Activated B cell treated with CpG ODN at 0.5 μM for 24 hours (primary cell): ENCODE measurements at regions of chr13 and their contacts with region 1.

Region 1: DNA sequence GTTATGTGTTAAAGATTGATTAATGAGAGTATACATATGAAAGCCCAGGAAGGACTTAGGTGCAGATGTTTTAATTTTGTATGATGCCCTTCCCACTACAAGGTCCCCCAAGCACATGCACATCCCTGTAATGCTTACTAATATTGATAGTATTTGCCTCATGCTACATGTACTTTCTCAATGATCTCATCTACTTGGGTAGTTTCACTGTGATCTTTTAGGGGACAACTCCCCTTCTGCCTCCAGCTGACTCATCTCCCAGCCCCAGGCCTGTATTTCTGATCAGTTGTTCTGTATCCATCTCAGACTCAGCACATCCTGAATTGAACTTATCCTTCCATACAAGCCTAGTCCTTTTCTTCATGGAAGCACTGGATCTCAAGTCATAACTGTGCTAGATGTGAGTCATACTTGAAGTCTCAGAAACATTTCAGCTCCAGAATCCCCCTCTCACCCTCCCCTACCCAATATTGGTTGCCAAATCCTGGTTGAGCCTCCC is 49.4 kb upstream of the INTS6 start:
- DNase-seq: no peak
- ATAC-seq: peak; percentile 74
- H3K4me3 Mint-ChIP-seq: no peak overlapping the region
- H3K27ac Mint-ChIP-seq: peak overlapping the region; percentile 61
- H3K4me1 Mint-ChIP-seq: peaks cover 15% of the 10 kb centered on the region
- H3K27me3 Mint-ChIP-seq: no peaks in the 10 kb centered on the region
- CTCF ChIP-seq: no peak

Region 2: GRCh38 chr13:51405176-51405575 is 97.0 kb before region 1 on chr13:
- CTCF ChIA-PET with region 1: no interaction called
- POLR2A ChIA-PET with region 1: no interaction called
- intact Hi-C with region 1: no loop called
- DNase-seq: no peak
- ATAC-seq: no peak
- H3K4me3 Mint-ChIP-seq: no peak overlapping the region
- H3K27ac Mint-ChIP-seq: no peak overlapping the region
- H3K4me1 Mint-ChIP-seq: peaks cover 41% of the 10 kb centered on the region
- H3K27me3 Mint-ChIP-seq: no peaks in the 10 kb centered on the region
- CTCF ChIP-seq: no peak

Region 3: GRCh38 chr13:51488212-51488611 is 14.0 kb before region 1 on chr13:
- CTCF ChIA-PET with region 1: no interaction called
- POLR2A ChIA-PET with region 1: no interaction called
- intact Hi-C with region 1: no loop called
- DNase-seq: no peak
- ATAC-seq: no peak
- H3K4me3 Mint-ChIP-seq: no peak overlapping the region
- H3K27ac Mint-ChIP-seq: no peak overlapping the region
- H3K4me1 Mint-ChIP-seq: no peaks in the 10 kb centered on the region
- H3K27me3 Mint-ChIP-seq: peaks cover 3% of the 10 kb centered on the region
- CTCF ChIP-seq: no peak

Region 4: DNA sequence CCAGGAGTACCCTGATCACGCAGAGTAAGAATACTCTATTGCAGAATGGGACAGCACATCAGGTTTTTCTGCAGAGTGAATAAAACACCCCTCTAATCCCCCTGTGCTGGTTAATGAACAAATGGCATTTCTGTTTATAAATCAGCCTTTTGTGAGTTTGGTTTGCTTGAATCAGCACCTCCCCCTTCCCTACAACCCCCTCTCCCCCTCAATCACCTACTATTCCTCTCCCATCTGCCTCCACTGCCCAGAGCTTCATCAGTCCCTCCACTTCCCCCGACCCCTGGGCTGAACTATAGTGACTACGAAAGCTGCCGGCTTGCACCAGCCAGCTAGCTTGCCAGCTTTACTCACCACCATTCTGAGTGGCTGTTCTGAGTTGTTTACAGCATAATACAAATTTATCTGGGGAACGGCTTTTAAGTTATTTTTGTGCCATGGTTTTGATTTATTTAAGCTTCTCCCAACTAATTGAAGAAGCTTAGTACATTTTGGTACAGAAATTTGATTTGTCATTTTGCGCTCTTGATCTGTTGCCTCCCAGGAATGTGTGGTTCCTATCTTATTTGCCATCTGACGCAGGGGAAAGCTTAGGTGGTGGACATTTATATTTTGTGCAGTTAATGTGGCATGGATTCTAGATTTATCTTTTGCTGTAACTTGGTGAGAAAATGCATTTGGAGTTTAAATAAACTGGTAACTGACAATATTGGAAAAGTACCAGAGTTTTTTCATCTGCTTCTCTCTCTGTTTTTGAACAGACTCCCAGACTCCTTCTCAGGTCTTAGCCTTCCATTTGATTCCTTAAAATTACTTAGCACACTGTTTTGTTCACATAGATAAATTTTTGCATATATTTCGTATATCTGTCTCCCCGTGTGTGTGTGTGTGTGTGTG is 40.4 kb after region 1 on chr13:
- CTCF ChIA-PET with region 1: no interaction called
- POLR2A ChIA-PET with region 1: no interaction called
- intact Hi-C with region 1: loop called (anchors 5 kb)
- DNase-seq: no peak
- ATAC-seq: no peak
- H3K4me3 Mint-ChIP-seq: no peak overlapping the region
- H3K27ac Mint-ChIP-seq: no peak overlapping the region
- H3K4me1 Mint-ChIP-seq: no peaks in the 10 kb centered on the region
- H3K27me3 Mint-ChIP-seq: no peaks in the 10 kb centered on the region
- CTCF ChIP-seq: no peak